HEK293 (cell line): ENCODE measurements at regions of chr10 and their contacts with region 1.

Region 1: GRCh38 chr10:94320285-94320914 is 42.3 kb downstream of the NOC3L start:
- H3K4me3 ChIP-seq: no peak overlapping the region
- H3K27ac ChIP-seq: no peak overlapping the region
- H3K4me1 ChIP-seq: no peaks in the 10 kb centered on the region
- CTCF ChIP-seq: peak; percentile 58

Region 2: GRCh38 chr10:93916257-93917063 is 403.9 kb before region 1 on chr10:
- CTCF ChIA-PET with region 1: interaction called, 71 read pairs
- POLR2A ChIA-PET with region 1: interaction called, 4 read pairs
- H3K4me3 ChIP-seq: no peak overlapping the region
- H3K27ac ChIP-seq: no peak overlapping the region
- H3K4me1 ChIP-seq: no peaks in the 10 kb centered on the region
- CTCF ChIP-seq: no peak

Region 3: DNA sequence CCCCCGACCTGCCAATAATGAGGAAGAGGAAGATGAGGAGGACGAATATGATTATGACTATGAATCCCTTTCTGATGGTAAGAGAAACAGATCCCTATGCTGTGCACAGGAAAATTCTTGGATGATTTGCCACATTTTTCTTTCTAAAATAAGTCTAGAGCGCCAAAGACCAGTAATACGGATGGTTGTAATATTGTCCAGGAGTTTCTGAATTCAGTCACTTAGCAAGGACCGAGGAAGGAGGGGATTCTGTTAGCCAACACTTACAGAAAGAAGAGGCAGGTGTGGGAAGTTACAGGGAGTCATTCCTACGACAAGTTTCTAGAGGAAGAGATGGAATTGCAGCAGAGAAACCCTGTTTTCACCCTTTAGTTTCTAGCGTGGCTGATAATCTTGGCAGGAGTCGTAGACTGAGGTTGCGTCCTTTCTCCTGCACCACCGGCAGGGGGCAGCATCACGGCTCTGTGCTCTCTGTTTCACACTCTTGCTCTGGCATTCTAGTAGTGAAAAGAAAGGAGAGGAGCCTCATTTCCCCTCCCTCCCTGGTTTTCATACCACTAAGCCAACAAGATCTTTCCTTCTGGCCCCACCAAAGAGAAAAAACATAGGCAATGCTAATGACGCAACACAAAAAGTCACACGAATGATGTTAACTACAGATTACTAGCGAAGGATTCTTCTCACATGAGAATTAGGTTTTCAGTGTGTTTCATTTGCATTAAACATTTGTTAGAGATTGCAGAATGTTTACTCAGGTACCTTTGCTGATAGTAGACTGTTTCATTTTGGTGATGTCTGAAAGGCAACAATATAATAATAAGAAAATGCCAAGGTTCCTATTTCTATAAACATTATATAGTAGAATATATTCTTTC is 40.3 kb before region 1 on chr10:
- CTCF ChIA-PET with region 1: interaction called, 16 read pairs
- POLR2A ChIA-PET with region 1: no interaction called
- H3K4me3 ChIP-seq: no peak overlapping the region
- H3K27ac ChIP-seq: no peak overlapping the region
- H3K4me1 ChIP-seq: no peaks in the 10 kb centered on the region
- CTCF ChIP-seq: peak; percentile 74

Region 4: GRCh38 chr10:94308866-94309265 is 11.5 kb before region 1 on chr10:
- CTCF ChIA-PET with region 1: interaction called, 32 read pairs
- POLR2A ChIA-PET with region 1: no interaction called
- H3K4me3 ChIP-seq: no peak overlapping the region
- H3K27ac ChIP-seq: no peak overlapping the region
- H3K4me1 ChIP-seq: no peaks in the 10 kb centered on the region
- CTCF ChIP-seq: no peak

Region 5: GRCh38 chr10:94370501-94370900 is 50.1 kb after region 1 on chr10:
- CTCF ChIA-PET with region 1: no interaction called
- POLR2A ChIA-PET with region 1: no interaction called
- H3K4me3 ChIP-seq: no peak overlapping the region
- H3K27ac ChIP-seq: no peak overlapping the region
- H3K4me1 ChIP-seq: no peaks in the 10 kb centered on the region
- CTCF ChIP-seq: no peak

Region 6: GRCh38 chr10:94443047-94443446 is 122.6 kb after region 1 on chr10:
- CTCF ChIA-PET with region 1: interaction called, 14 read pairs
- POLR2A ChIA-PET with region 1: no interaction called
- H3K4me3 ChIP-seq: no peak overlapping the region
- H3K27ac ChIP-seq: no peak overlapping the region
- H3K4me1 ChIP-seq: no peaks in the 10 kb centered on the region
- CTCF ChIP-seq: no peak

Region 7: GRCh38 chr10:94490789-94491039 is 170.3 kb after region 1 on chr10:
- CTCF ChIA-PET with region 1: no interaction called
- POLR2A ChIA-PET with region 1: no interaction called
- H3K4me3 ChIP-seq: no peak overlapping the region
- H3K27ac ChIP-seq: no peak overlapping the region
- H3K4me1 ChIP-seq: peaks cover 8% of the 10 kb centered on the region
- CTCF ChIP-seq: no peak